Posterior cingulate gyrus (tissue), 11 donors: ENCODE measurements at regions of chr1 and their contacts with region 1.

Region 1: GRCh38 chr1:179882243-179883039 is at the start of gene TOR1AIP1:
- DNase-seq: peak; percentile 94 to 99 (median 96)

Region 2: GRCh38 chr1:179706339-179706941 is 176.0 kb before region 1 on chr1:
- intact Hi-C with region 1: no loop called
- DNase-seq: peak in 7 of 10 donors; percentile 43 to 85 (median 56)

Region 3: GRCh38 chr1:179954493-179955297 is 72.3 kb after region 1 on chr1 and contains the start of gene CEP350:
- intact Hi-C with region 1: loop called (anchors 1 kb)
- DNase-seq: peak; percentile 93 to 99 (median 95)

Region 4: DNA sequence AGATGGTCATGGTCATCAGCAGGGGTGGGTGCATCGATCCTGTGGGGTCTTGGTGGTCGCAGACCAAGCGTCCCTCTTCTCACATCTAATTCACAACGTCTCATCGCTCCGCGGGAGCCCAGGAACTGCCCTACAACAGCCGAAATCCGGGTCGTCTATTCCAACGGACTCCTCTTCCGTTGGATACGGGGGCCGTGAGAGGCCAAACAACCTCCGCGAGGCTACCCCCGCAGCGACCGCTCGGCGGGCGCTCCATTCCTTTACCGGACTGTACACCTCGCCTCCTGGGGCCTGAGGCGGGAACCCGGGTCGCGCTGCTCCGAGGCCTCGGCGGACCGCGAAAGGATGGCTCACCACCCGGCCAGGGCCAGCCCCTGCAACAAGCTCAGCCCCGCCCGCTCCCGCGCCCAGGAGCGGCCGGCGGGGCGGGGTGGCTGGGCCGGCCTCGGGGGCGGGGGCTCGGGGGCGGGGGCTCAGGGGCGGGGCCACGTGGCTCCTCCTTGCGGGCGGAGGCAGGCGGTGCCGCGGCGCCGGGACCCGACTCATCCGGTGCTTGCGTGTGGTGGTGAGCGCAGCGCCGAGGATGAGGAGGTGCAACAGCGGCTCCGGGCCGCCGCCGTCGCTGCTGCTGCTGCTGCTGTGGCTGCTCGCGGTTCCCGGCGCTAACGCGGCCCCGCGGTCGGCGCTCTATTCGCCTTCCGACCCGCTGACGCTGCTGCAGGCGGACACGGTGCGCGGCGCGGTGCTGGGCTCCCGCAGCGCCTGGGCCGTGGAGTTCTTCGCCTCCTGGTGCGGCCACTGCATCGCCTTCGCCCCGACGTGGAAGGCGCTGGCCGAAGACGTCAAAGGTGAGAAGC is 272.1 kb after region 1 on chr1 and contains the start of gene QSOX1:
- intact Hi-C with region 1: loop called (anchors 2 kb)
- DNase-seq: peak; percentile 79 to 98 (median 90)